IMR-90 (cell line): ENCODE measurements at regions of chr3 and their contacts with region 1.

Region 1: DNA sequence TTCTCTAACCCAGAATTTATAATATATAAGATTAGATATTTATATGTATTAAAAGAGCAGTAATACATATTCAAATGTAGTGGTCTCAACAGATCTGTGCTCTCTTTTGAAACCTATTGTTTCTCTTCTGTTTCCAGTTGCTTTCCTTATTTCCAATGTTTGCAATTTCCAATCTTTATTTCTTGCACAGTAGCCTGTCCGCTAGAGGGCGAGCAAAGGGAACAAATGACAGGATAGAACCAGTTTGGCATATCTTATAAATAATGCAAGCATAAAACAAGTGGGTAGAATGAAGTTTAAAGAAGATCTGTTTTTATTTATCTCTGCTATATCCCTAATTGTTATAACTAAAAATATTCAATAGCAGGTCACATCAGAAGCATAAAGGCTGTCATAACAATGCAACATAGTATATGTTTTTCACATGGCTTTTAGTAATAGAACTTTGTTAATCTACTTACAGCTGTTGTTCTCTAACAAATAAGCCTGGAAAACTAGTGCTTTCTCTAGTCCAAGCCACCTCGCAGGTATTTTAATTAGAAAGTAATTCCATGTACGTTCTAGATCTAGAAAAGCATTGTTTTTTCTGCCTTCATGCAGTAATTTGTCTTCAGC is 15.1 kb upstream of the TCAIM start:
- DNase-seq: peak; percentile 71
- ATAC-seq: peak; percentile 86
- H3K4me3 ChIP-seq: no peak overlapping the region
- H3K27ac ChIP-seq: no peak overlapping the region
- H3K4me1 ChIP-seq: no peaks in the 10 kb centered on the region
- H3K27me3 ChIP-seq: peaks cover 3% of the 10 kb centered on the region; the same call in 1 of the 2 replicates
- CTCF ChIP-seq: peak; percentile 88
- POLR2A ChIP-seq: no peak
- RAD21 ChIP-seq: peak; percentile 86

Region 2: DNA sequence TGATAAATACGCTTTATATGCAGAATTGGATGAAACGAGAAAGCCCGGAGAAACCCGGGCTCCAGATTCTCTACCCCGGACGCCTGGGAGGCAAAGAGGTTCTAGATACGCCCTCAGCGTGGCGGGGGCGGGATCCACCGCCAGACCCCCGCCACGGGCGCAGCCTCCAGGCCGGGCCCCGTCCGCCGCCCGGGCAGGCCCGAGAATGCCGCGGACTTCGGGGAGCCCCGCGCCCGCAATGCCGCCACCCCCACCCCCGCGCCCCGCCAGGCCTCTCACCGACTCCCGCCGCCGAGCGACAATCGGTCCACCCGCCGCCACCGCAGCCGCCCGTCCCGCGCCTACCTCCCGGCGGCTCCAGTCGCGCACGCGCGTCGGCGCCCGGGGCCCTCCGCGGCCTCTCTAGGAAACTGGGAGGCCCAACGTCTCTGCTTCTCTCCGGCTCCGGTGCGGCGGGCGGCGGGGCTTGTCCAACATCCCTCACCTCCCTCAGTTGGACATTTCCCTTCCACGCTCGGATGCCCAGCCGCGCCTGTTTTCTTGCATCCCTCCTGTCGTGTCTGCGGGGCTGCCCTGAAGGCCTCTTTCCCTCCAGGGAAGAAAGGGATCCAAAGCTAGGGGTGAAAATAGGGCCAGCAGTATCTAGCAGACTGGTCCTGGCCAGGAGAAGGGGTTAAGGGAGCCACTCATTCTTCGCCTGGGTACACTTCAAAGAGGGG is 154.0 kb after region 1 on chr3 and contains the start of gene ZNF445:
- CTCF ChIA-PET with region 1: no interaction called
- POLR2A ChIA-PET with region 1: no interaction called
- dilution Hi-C with region 1: no loop called
- in situ Hi-C with region 1: no loop called
- intact Hi-C with region 1: loop called (anchors 1 kb)
- DNase-seq: peak; percentile 74
- ATAC-seq: peak; percentile 97
- H3K4me3 ChIP-seq: peak within 1 kb of the TSS; percentile 55
- H3K27ac ChIP-seq: peak within 1 kb of the TSS; percentile 74
- H3K4me1 ChIP-seq: no peaks in the 10 kb centered on the region; the same call in 1 of the 2 replicates
- H3K27me3 ChIP-seq: no peaks in the 10 kb centered on the region
- CTCF ChIP-seq: no peak
- POLR2A ChIP-seq: peak; percentile 65; the same call in 1 of the 2 replicates
- RAD21 ChIP-seq: no peak
- total RNA-seq, gene ZNF445: 6.3 and 6.4 TPM in 2 replicates

Region 3: DNA sequence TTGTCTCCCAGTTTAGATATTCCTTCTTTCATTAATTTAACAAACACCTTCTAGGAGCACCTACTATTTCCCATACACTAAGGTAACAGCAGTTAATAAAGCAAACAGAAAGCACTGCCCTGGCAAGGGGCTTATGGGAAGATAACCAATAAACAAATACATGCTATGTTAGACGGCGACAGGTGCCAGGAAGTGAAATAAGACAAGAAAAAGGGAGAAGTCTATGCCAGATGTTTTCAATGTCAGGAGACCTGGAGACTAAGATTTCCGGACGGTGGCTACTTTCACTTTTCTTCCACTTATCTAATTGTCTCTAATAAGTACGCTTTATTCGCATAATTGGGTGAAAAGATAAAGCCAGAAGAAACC is 186.5 kb after region 1 on chr3:
- CTCF ChIA-PET with region 1: interaction called, 3 read pairs
- POLR2A ChIA-PET with region 1: no interaction called
- dilution Hi-C with region 1: no loop called
- in situ Hi-C with region 1: no loop called
- intact Hi-C with region 1: loop called (anchors 1 kb)
- DNase-seq: peak; percentile 17
- ATAC-seq: no peak
- H3K4me3 ChIP-seq: peak overlapping the region; percentile 94
- H3K27ac ChIP-seq: peak overlapping the region; percentile 15; the same call in 1 of the 2 replicates
- H3K4me1 ChIP-seq: peaks cover 6% of the 10 kb centered on the region
- H3K27me3 ChIP-seq: no peaks in the 10 kb centered on the region
- CTCF ChIP-seq: no peak
- POLR2A ChIP-seq: no peak
- RAD21 ChIP-seq: no peak